Dorsolateral prefrontal cortex (tissue), 120 donors: ENCODE measurements at regions of chr4 and their contacts with region 1.

Region 1: GRCh38 chr4:107037199-107037584 is 1.1 kb upstream of the DKK2 start:
- DNase-seq: peak; percentile 31 to 72 (median 52)
- H3K4me3 ChIP-seq: peak overlapping the region; percentile 33 to 76 (median 59)
- H3K27ac ChIP-seq: peak overlapping the region in 3 of 59 donors; percentile 9 to 40 (median 25)
- H3K27me3 ChIP-seq: peaks cover 0 to 53% (median 11%) of the 10 kb centered on the region in 45 donors
- CTCF ChIP-seq: peak in 53 of 56 donors; percentile 25 to 70 (median 51)

Region 2: GRCh38 chr4:107183155-107183774 is 146.1 kb after region 1 on chr4:
- intact Hi-C with region 1: loop called (anchors 5 to 10 kb)
- DNase-seq: peak in 1 of 10 donors; percentile 31
- H3K4me3 ChIP-seq: no peak overlapping the region
- H3K27ac ChIP-seq: no peak overlapping the region
- H3K27me3 ChIP-seq: peaks cover 0 to 2% (median 0%) of the 10 kb centered on the region in 45 donors
- CTCF ChIP-seq: peak; percentile 36 to 88 (median 76)

Region 3: DNA sequence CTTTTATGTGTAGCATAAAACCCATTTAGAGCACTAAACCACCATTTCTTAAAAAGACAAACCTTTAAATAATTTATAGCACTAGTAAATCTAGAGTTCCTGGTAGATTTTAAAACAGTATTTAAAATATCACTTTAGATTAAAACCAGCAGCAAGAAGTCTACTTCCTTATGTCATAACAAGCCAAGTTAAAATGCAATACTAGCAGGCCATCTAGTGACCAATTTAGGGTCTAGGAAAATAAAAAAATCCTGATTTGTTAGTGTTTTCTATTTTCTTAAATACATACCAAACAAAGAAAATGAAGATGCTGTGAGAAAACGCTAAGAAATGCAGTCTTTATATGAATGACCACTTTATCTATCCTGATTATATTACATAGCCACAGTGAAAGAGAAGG is 628.9 kb after region 1 on chr4:
- intact Hi-C with region 1: loop called in 1 of 2 experiments (anchors 10 kb)
- DNase-seq: no peak
- H3K4me3 ChIP-seq: no peak overlapping the region
- H3K27ac ChIP-seq: peak overlapping the region in 6 of 59 donors; percentile 10 to 44 (median 20)
- H3K27me3 ChIP-seq: no peaks in the 10 kb centered on the region
- CTCF ChIP-seq: peak in 55 of 56 donors; percentile 18 to 73 (median 51)